ENCODE measurements at regions of chr5 and their contacts with region 1.

Region 1: DNA sequence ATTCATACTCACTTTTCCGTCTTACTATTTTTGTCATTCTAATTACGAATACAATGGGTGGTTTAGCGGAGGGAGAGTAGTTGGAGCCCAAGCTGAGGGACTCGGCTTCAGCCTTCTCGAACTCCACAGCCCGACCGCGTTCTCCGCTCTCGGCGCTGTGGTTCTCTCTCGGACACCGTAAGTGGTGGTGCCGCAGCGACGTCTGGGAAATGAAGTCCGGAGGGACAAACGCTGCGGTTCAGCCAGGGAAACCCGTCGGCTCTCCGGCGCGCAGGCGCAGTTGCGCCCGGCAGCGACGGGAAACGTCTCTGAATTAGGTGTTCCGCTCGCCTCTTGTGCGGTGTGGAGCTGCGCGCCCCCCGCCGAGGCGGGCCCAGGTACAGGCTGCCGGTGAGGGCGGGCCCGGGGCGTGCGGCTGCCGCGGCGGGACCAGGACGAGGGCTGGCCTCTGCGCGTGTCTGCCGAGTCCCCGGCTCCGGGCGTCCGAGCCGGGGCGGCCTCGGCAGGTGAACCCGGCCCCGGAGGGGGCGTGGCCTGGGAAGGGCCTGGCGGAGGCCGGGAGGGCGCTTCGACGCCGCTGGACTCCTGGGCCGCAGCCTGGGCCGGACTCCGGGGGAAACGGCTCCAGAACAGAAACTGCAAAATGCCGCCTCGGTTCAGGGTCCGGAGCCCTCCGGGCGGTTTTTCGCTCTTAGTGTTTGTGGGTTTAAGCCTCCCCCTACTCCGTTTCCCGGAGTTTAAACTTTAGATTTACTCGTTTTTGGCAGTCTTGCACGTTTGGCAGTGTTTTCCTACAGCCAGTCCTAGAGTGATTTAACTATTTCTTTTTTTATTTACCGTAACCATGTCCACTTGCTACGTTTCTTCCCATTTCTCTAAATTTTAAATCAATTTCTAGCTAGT is at the start of gene ZNF879:
- H3K4me3 Mint-ChIP-seq: peak within 1 kb of the TSS; percentile 87
- H3K27ac Mint-ChIP-seq: peak within 1 kb of the TSS; percentile 75
- H3K4me1 Mint-ChIP-seq: peaks cover 15% of the 10 kb centered on the region
- H3K27me3 Mint-ChIP-seq: peaks cover 7% of the 10 kb centered on the region

Region 2: GRCh38 chr5:178626484-178627258 is 397.1 kb before region 1 on chr5 and contains the start of gene CLK4:
- intact Hi-C with region 1: loop called (anchors 2 kb)
- H3K4me3 Mint-ChIP-seq: peak within 1 kb of the TSS; percentile 95
- H3K27ac Mint-ChIP-seq: peak within 1 kb of the TSS; percentile 99
- H3K4me1 Mint-ChIP-seq: peaks cover 7% of the 10 kb centered on the region
- H3K27me3 Mint-ChIP-seq: peaks cover 8% of the 10 kb centered on the region

Region 3: GRCh38 chr5:178859625-178860531 is 163.9 kb before region 1 on chr5 and contains the start of gene ZNF354B:
- intact Hi-C with region 1: loop called (anchors 1 kb)
- H3K4me3 Mint-ChIP-seq: peak within 1 kb of the TSS; percentile 90
- H3K27ac Mint-ChIP-seq: peak within 1 kb of the TSS; percentile 87
- H3K4me1 Mint-ChIP-seq: peaks cover 21% of the 10 kb centered on the region
- H3K27me3 Mint-ChIP-seq: no peaks in the 10 kb centered on the region

Region 4: GRCh38 chr5:178881073-178881472 is 142.7 kb before region 1 on chr5:
- intact Hi-C with region 1: loop called (anchors 10 kb)
- H3K4me3 Mint-ChIP-seq: no peak overlapping the region
- H3K27ac Mint-ChIP-seq: no peak overlapping the region
- H3K4me1 Mint-ChIP-seq: no peaks in the 10 kb centered on the region
- H3K27me3 Mint-ChIP-seq: no peaks in the 10 kb centered on the region

Region 5: DNA sequence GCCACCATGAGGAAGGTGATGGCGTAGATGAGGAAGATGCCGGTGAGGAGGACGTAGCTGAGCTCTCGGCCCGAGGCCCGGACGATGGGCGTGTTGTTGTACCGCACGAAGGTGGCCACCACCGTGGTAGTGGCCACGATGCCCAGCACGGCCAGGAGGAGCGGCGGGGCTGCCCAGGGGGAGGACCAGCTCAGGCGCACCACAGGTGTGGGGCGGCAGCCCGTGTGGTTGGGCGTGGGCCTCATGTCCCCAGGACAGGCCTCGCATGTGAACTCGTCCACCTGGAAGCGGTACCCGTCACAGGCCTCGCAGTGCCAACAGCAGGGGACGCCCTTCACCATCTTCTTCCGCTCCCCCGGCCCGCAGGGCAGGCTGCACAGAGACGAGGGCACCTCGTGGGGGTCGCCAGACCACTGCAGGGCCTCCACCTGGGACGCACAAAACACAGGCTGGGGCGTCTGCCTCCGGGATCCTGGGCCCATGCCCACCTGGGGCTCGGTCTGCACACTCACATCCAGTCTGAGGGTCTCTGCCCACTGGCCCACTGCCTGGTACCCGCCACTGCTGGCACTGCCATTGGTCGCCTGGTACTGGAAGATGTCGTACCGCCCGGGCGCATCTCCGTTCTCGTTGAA is 37.3 kb before region 1 on chr5:
- intact Hi-C with region 1: no loop called
- H3K4me3 Mint-ChIP-seq: no peak overlapping the region
- H3K27ac Mint-ChIP-seq: no peak overlapping the region
- H3K4me1 Mint-ChIP-seq: no peaks in the 10 kb centered on the region
- H3K27me3 Mint-ChIP-seq: no peaks in the 10 kb centered on the region

Region 6: DNA sequence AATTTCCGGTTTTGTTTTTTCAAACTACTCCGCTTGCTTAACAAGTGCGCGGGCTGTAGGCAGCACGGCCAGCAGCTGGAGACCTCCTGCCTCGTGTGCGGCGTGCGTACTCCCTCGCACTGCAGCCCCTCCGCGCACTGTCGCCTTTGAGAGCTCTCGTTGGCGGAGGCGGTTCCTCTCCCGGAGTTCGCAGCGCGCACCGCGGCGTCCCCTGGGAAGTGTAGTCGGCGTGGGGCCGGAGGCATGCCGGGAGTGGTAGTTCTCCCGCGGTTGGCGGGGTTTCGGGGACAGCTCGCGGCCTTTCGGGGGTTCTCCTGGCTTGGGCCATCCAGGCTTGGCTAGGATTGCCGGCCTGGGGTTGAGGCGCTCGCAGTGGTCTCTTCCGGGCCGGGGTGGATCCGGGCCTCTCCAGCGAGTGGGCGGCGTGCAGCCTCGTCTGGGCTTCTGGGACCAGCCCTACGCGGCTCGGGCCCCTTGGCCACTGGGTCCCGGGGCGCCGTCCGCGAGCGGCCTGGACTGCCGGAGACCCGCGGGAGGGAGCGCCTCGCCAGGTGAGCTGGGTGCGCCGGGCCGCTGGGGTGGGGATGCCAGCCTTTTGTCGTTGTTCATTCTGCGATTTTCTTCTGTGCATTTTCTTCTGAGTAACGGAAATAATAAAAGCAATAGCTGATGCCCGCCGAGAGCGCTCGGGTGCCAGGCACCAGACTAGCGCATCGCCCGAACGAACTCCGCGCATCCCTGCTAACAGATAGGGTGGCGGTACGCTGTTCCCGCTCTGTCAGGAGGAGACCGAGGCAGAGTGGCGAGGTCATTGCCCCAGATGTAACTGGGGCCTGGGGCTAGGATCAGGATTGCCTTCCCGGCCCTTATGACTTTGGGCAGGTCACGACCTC is 36.6 kb after region 1 on chr5 and contains the start of gene ZNF354C:
- intact Hi-C with region 1: loop called (anchors 1 kb)
- H3K4me3 Mint-ChIP-seq: peak within 1 kb of the TSS; percentile 78
- H3K27ac Mint-ChIP-seq: peak within 1 kb of the TSS; percentile 81
- H3K4me1 Mint-ChIP-seq: peaks cover 4% of the 10 kb centered on the region
- H3K27me3 Mint-ChIP-seq: peaks cover 5% of the 10 kb centered on the region

Region 7: DNA sequence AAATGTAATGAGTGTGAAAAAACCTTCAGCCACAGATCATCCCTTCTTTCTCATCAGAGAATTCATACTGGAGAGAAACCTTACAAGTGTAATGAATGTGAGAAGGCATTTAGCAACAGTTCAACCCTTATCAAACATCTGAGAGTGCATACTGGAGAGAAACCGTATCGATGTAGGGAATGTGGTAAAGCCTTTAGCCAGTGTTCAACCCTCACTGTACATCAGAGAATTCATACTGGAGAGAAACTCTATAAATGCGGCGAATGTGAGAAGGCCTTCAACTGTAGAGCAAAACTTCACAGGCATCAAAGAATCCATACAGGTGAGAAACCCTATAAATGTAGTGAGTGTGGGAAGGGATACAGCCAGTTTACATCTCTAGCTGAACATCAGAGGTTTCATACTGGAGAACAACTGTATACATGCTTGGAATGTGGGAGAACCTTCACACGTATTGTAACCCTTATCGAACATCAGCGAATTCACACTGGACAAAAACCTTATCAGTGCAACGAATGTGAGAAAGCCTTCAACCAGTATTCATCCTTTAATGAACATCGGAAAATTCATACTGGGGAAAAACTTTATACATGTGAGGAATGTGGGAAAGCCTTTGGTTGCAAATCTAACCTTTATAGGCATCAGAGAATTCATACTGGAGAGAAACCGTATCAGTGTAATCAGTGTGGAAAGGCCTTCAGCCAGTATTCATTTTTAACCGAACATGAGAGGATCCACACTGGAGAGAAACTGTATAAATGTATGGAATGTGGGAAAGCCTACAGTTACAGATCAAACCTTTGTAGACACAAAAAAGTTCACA is 55.6 kb after region 1 on chr5:
- intact Hi-C with region 1: no loop called
- H3K4me3 Mint-ChIP-seq: no peak overlapping the region
- H3K27ac Mint-ChIP-seq: no peak overlapping the region
- H3K4me1 Mint-ChIP-seq: no peaks in the 10 kb centered on the region
- H3K27me3 Mint-ChIP-seq: no peaks in the 10 kb centered on the region

Measured in dendritic cell treated with granulocyte-macrophage colony-stimulating factor and Interleukin-4, amounts not matched to agents 40 ng/mL and 50 ng/mL, for 4 days (primary cell).